Ovary (tissue), 10 donors: ENCODE measurements at regions of chr12 and their contacts with region 1.

Region 1: GRCh38 chr12:3905664-3906063 is 32.5 kb upstream of the PARP11 start:
- DNase-seq: no peak
- H3K4me3 ChIP-seq: no peak overlapping the region
- H3K27ac ChIP-seq: no peak overlapping the region
- H3K4me1 ChIP-seq: no peaks in the 10 kb centered on the region
- H3K27me3 ChIP-seq: no peaks in the 10 kb centered on the region
- CTCF ChIP-seq: no peak
- EP300 ChIP-seq: no peak
- POLR2A ChIP-seq: no peak

Region 2: GRCh38 chr12:4052691-4053090 is 147.0 kb after region 1 on chr12:
- intact Hi-C with region 1: loop called in 1 of 4 experiments (anchors 5 kb)
- DNase-seq: no peak
- H3K4me3 ChIP-seq: no peak overlapping the region
- H3K27ac ChIP-seq: no peak overlapping the region
- H3K4me1 ChIP-seq: no peaks in the 10 kb centered on the region
- H3K27me3 ChIP-seq: no peaks in the 10 kb centered on the region
- CTCF ChIP-seq: no peak
- EP300 ChIP-seq: no peak
- POLR2A ChIP-seq: no peak